ENCODE measurements at regions of chr3 and their contacts with region 1.

Region 1: GRCh38 chr3:32922078-32922477 is 29.4 kb upstream of the CCR4 start:
- DNase-seq: no peak
- H3K4me3 ChIP-seq: no peak overlapping the region
- H3K27ac ChIP-seq: no peak overlapping the region
- H3K4me1 ChIP-seq: no peaks in the 10 kb centered on the region
- H3K27me3 ChIP-seq: no peaks in the 10 kb centered on the region
- CTCF ChIP-seq: no peak

Region 2: DNA sequence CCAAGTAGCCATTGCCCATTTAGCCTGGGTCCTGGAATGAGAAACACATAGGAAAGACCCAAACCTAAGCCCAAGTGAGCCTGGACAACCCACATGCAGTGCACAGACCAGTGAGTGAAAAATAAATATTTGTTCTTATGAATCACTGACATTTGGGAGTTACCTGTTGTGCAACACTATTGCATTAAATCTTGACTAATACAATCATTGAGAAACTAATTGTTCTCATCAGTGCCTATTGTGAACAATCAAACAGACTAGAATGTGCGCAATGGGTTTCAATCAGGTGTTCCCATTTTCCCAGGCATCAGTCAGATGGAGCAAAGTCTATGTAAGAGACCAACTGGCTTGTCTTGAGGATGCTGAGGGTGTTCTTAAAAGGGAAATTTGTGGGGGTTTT is 291.8 kb before region 1 on chr3:
- CTCF ChIA-PET with region 1: no interaction called
- POLR2A ChIA-PET with region 1: no interaction called
- intact Hi-C with region 1: no loop called
- DNase-seq: peak in 1 of 2 experiments; percentile 61
- H3K4me3 ChIP-seq: no peak overlapping the region
- H3K27ac ChIP-seq: no peak overlapping the region
- H3K4me1 ChIP-seq: peaks cover 7% of the 10 kb centered on the region
- H3K27me3 ChIP-seq: no peaks in the 10 kb centered on the region
- CTCF ChIP-seq: no peak

Region 3: GRCh38 chr3:32733631-32734229 is 188.3 kb before region 1 on chr3:
- CTCF ChIA-PET with region 1: no interaction called
- POLR2A ChIA-PET with region 1: no interaction called
- intact Hi-C with region 1: no loop called
- DNase-seq: no peak
- H3K4me3 ChIP-seq: no peak overlapping the region
- H3K27ac ChIP-seq: no peak overlapping the region
- H3K4me1 ChIP-seq: no peaks in the 10 kb centered on the region
- H3K27me3 ChIP-seq: no peaks in the 10 kb centered on the region
- CTCF ChIP-seq: peak; percentile 60

Region 4: DNA sequence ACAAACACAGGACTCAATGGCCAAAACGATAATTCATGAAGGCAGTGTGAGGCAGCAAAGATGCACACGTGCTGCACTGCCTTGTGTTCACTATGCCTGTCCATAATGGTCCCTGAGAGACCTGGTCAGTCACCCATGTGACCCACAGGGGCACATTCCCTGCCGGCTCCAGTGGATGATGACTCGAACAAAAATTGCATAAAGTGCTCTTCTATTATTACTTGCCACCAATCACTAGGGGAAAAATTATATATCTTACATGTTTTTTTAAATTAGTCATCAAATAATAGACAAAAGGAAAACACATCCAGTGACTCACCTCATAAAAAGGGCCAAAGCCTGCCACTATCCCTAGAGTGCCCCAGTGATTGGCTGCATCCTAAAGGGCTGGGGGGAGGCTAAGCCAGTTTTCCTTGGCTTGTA is 470.6 kb after region 1 on chr3:
- CTCF ChIA-PET with region 1: interaction called, 12 read pairs
- POLR2A ChIA-PET with region 1: no interaction called
- intact Hi-C with region 1: no loop called
- DNase-seq: peak; percentile 32 to 72
- H3K4me3 ChIP-seq: no peak overlapping the region
- H3K27ac ChIP-seq: peak overlapping the region; percentile 32; the same call in 1 of the 2 replicates
- H3K4me1 ChIP-seq: peaks cover 15% of the 10 kb centered on the region
- H3K27me3 ChIP-seq: no peaks in the 10 kb centered on the region
- CTCF ChIP-seq: no peak